HepG2 (cell line): ENCODE measurements at regions of chr12 and their contacts with region 1.

Region 1: DNA sequence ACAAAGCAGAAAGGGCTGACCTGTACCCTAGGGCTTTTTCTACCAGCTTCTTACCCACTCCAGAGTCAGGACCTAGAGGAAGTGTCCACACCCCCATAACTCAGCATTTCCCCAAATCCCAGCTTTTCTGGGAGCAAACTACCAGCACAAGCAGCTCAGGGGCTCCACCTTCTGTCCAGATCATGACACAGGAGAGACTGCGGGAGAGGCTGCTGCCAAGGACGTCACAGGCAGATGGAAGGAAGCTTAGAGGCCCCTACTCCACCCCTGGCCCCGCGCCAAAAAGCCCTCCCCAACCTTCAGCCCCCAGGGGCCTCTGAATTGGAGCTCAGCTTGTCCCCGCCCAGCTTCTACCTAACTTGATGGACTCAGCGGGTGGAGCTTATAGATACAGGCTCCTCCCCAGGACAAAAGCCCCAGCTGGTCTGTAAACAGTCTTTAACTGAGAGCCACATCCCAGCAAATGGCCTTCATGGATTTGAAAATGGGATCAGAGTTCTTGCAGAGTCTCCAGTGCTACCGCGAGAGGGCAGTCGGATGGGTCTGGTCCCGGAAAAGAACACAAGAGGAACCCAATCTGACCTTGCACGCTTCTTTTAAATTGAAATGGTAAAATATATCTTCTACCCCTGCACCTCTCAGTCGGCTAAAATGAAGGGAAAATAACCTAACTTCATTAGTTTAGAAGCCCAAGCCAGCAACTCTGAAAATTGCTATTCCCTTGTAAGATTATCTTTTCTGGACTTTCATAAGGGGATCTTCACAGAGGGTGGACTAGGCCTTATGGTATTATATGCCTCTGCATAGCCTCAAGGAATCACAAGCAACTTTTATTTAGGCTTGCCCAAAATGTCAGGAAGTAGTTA is 6.8 kb upstream of the BAZ2A start:
- DNase-seq: peak; percentile 100
- ATAC-seq: peak; percentile 74
- H3K4me3 ChIP-seq: peak overlapping the region; percentile 68 to 92 (median 80)
- H3K27ac ChIP-seq: peak overlapping the region; percentile 92
- H3K4me1 ChIP-seq: peaks cover 35% of the 10 kb centered on the region
- H3K27me3 ChIP-seq: peaks cover 0 to 3% of the 10 kb centered on the region in 2 experiments; a peak in 1 of 5 replicates
- CTCF ChIP-seq: peak; percentile 79
- EP300 ChIP-seq: peak in 1 of 2 experiments; percentile 80; a peak in 2 of 4 replicates
- POLR2A ChIP-seq: peak in 1 of 2 experiments; percentile 47; a peak in 2 of 4 replicates
- RAD21 ChIP-seq: peak; percentile 64

Region 2: GRCh38 chr12:55060470-55060869 is 1576.4 kb before region 1 on chr12:
- CTCF ChIA-PET with region 1: no interaction called
- POLR2A ChIA-PET with region 1: no interaction called
- in situ Hi-C with region 1: no loop called
- intact Hi-C with region 1: no loop called
- DNase-seq: no peak
- ATAC-seq: no peak
- H3K4me3 ChIP-seq: no peak overlapping the region
- H3K27ac ChIP-seq: no peak overlapping the region
- H3K4me1 ChIP-seq: no peaks in the 10 kb centered on the region
- H3K27me3 ChIP-seq: no peaks in the 10 kb centered on the region; a peak in 3 of 5 replicates
- CTCF ChIP-seq: no peak
- EP300 ChIP-seq: no peak
- POLR2A ChIP-seq: no peak
- RAD21 ChIP-seq: no peak

Region 3: DNA sequence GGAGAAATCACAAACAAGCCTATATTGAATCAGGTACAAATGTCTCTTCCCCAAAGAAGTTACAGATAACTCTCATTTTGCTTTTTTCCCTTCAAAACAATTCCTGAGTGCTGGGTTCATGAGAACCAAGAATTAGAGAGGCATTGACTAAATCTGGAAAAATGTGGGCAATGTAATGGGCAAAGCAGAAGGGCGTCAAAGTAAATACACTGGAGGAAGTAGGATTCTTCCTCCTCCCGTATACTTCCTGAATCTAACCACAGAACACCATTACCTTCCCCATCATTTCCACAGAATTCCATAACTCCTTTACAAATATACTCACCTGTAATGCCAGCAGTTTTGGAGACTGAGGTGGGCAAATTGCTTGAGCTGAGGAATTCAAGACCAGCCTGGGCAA is 118.3 kb before region 1 on chr12:
- CTCF ChIA-PET with region 1: interaction called, 4 read pairs
- POLR2A ChIA-PET with region 1: interaction called, 4 read pairs
- in situ Hi-C with region 1: no loop called
- intact Hi-C with region 1: loop called (anchors 1 kb)
- DNase-seq: peak; percentile 38
- ATAC-seq: no peak
- H3K4me3 ChIP-seq: no peak overlapping the region
- H3K27ac ChIP-seq: no peak overlapping the region
- H3K4me1 ChIP-seq: peaks cover 31% of the 10 kb centered on the region
- H3K27me3 ChIP-seq: no peaks in the 10 kb centered on the region; a peak in 1 of 5 replicates
- CTCF ChIP-seq: no peak
- EP300 ChIP-seq: no peak
- POLR2A ChIP-seq: no peak
- RAD21 ChIP-seq: no peak

Region 4: GRCh38 chr12:56593909-56594621 is 42.8 kb before region 1 on chr12:
- CTCF ChIA-PET with region 1: interaction called, 4 read pairs
- POLR2A ChIA-PET with region 1: no interaction called
- in situ Hi-C with region 1: no loop called
- intact Hi-C with region 1: loop called (anchors 1 kb)
- DNase-seq: peak; percentile 35
- ATAC-seq: peak; percentile 77
- H3K4me3 ChIP-seq: no peak overlapping the region
- H3K27ac ChIP-seq: no peak overlapping the region
- H3K4me1 ChIP-seq: no peaks in the 10 kb centered on the region
- H3K27me3 ChIP-seq: no peaks in the 10 kb centered on the region
- CTCF ChIP-seq: peak; percentile 84
- EP300 ChIP-seq: no peak
- POLR2A ChIP-seq: no peak
- RAD21 ChIP-seq: peak; percentile 71

Region 5: DNA sequence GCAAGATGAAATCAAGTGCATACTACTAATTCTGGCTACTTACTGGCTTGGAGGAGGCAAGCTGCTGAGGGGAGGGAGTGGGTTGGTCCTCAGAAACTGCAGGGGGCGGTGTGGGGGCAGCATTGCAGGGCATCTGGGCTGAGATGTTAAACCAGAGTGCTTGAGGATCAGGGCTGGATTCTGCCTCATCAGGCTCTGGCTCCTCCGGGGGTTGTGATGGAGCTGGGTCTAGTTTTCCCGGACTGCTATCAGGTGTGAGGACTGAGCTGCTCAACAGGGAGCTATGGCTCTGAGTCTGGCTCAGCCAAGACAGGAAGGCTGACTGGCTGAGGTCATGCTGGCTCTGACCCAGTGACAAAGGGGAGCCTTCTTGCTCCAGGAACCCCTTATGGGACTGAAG is 35.4 kb before region 1 on chr12:
- CTCF ChIA-PET with region 1: no interaction called
- POLR2A ChIA-PET with region 1: interaction called, 3 read pairs
- in situ Hi-C with region 1: no loop called
- intact Hi-C with region 1: loop called (anchors 1 kb)
- DNase-seq: no peak
- ATAC-seq: peak; percentile 74
- H3K4me3 ChIP-seq: no peak overlapping the region
- H3K27ac ChIP-seq: no peak overlapping the region
- H3K4me1 ChIP-seq: no peaks in the 10 kb centered on the region
- H3K27me3 ChIP-seq: no peaks in the 10 kb centered on the region
- CTCF ChIP-seq: peak; percentile 47
- EP300 ChIP-seq: no peak
- POLR2A ChIP-seq: no peak
- RAD21 ChIP-seq: no peak

Region 6: DNA sequence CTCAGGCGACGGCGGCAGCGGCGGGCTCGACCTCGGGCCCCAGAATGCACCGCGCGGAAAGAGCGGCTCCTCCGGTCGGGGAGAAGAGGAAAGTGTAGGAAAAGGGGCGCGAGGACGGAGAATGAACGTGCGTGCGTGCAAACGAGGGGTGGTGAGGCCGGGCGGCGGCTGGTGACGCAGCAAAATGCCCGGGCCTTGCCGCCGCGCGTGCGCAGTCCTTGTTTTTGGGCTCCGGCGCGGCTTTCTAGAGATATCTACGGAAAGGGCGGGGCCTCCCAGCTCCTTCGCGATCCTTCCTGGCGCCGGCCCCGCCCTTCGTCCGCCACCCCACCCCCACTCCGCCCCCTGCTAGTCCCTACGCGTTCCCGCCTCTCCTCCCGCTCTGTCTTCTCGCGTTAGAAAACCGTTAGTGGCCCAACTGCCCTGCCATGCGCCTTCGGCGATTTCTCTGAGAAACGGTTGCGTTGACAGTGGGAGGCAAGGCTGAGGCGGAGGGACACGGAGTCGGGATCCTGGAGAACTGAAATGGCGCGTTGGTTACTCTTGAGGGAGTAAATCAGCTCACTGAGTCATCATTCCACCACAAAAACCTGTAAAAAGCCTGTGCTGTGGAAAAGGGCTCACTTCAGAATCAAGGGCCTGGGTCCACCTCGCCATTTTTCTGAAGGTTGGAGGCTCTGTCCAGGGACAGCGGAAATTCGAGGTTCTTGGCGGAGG is 51.4 kb after region 1 on chr12 and contains the start of gene PTGES3:
- CTCF ChIA-PET with region 1: no interaction called
- POLR2A ChIA-PET with region 1: interaction called, 40 read pairs
- in situ Hi-C with region 1: no loop called
- intact Hi-C with region 1: no loop called
- DNase-seq: peak; percentile 91
- ATAC-seq: peak; percentile 82
- H3K4me3 ChIP-seq: peak within 1 kb of the TSS; percentile 96 to 98 (median 98)
- H3K27ac ChIP-seq: peak within 1 kb of the TSS; percentile 99
- H3K4me1 ChIP-seq: peaks cover 17% of the 10 kb centered on the region
- H3K27me3 ChIP-seq: no peaks in the 10 kb centered on the region; a peak in 1 of 5 replicates
- CTCF ChIP-seq: 0 out of 2 replicates have a peak, but pooled peaks have one; percentile 3
- EP300 ChIP-seq: no peak; a peak in 1 of 4 replicates
- POLR2A ChIP-seq: peak; percentile 58 to 75
- RAD21 ChIP-seq: no peak
- total RNA-seq, gene PTGES3: 159 and 290 TPM in 2 replicates